ENCODE measurements at regions of chr10 and their contacts with region 1.

Region 1: GRCh38 chr10:114550756-114551635 is 107.1 kb downstream of the ABLIM1 start:
- DNase-seq: no peak
- ATAC-seq: no peak; the same call in 2 of the 3 replicates
- H3K4me3 ChIP-seq: no peak overlapping the region
- H3K27ac ChIP-seq: no peak overlapping the region
- H3K4me1 ChIP-seq: no peaks in the 10 kb centered on the region
- H3K27me3 ChIP-seq: no peaks in the 10 kb centered on the region; a peak in 1 of 4 replicates
- CTCF ChIP-seq: peak in 2 of 3 experiments; percentile 37 to 42; a peak in 3 of 6 replicates
- EP300 ChIP-seq: no peak
- POLR2A ChIP-seq: no peak
- RAD21 ChIP-seq: peak; percentile 41

Region 2: GRCh38 chr10:114526504-114527238 is 24.3 kb before region 1 on chr10:
- CTCF ChIA-PET with region 1: interaction called, 10 read pairs
- POLR2A ChIA-PET with region 1: no interaction called
- RAD21 ChIA-PET with region 1: no interaction called
- SMC1A ChIA-PET with region 1: interaction called, 3 read pairs
- in situ Hi-C with region 1: no loop called
- intact Hi-C with region 1: no loop called
- DNase-seq: peak; percentile 95
- ATAC-seq: peak; percentile 98
- H3K4me3 ChIP-seq: peak overlapping the region; percentile 69
- H3K27ac ChIP-seq: peak overlapping the region; percentile 71
- H3K4me1 ChIP-seq: 0 out of 2 replicates have a peak, but pooled peaks cover 3% of the 10 kb centered on the region
- H3K27me3 ChIP-seq: no peaks in the 10 kb centered on the region; a peak in 1 of 4 replicates
- CTCF ChIP-seq: no peak
- EP300 ChIP-seq: peak in 1 of 2 experiments; percentile 64; a peak in 2 of 4 replicates
- POLR2A ChIP-seq: peak; percentile 90
- RAD21 ChIP-seq: 0 out of 2 replicates have a peak, but pooled peaks have one; percentile 4

Region 3: GRCh38 chr10:114615600-114616007 is 64.6 kb after region 1 on chr10:
- CTCF ChIA-PET with region 1: no interaction called
- POLR2A ChIA-PET with region 1: no interaction called
- RAD21 ChIA-PET with region 1: no interaction called
- SMC1A ChIA-PET with region 1: no interaction called
- in situ Hi-C with region 1: no loop called
- intact Hi-C with region 1: no loop called
- DNase-seq: no peak
- ATAC-seq: peak; percentile 91
- H3K4me3 ChIP-seq: no peak overlapping the region
- H3K27ac ChIP-seq: no peak overlapping the region
- H3K4me1 ChIP-seq: no peaks in the 10 kb centered on the region
- H3K27me3 ChIP-seq: no peaks in the 10 kb centered on the region; a peak in 1 of 4 replicates
- CTCF ChIP-seq: no peak
- EP300 ChIP-seq: no peak
- POLR2A ChIP-seq: no peak
- RAD21 ChIP-seq: no peak

Region 4: GRCh38 chr10:114694752-114695151 is 143.8 kb after region 1 on chr10:
- CTCF ChIA-PET with region 1: interaction called, 17 read pairs
- POLR2A ChIA-PET with region 1: no interaction called
- RAD21 ChIA-PET with region 1: interaction called, 3 read pairs
- SMC1A ChIA-PET with region 1: interaction called, 3 read pairs
- in situ Hi-C with region 1: no loop called
- intact Hi-C with region 1: no loop called
- DNase-seq: no peak
- ATAC-seq: peak; percentile 59; the same call in 2 of the 3 replicates
- H3K4me3 ChIP-seq: no peak overlapping the region
- H3K27ac ChIP-seq: no peak overlapping the region
- H3K4me1 ChIP-seq: no peaks in the 10 kb centered on the region
- H3K27me3 ChIP-seq: no peaks in the 10 kb centered on the region; a peak in 2 of 4 replicates
- CTCF ChIP-seq: peak; percentile 40 to 54 (median 44); a peak in 5 of 6 replicates
- EP300 ChIP-seq: no peak
- POLR2A ChIP-seq: no peak
- RAD21 ChIP-seq: peak; percentile 61

Region 5: GRCh38 chr10:114703377-114704107 is 152.5 kb after region 1 on chr10:
- CTCF ChIA-PET with region 1: interaction called, 5 read pairs
- POLR2A ChIA-PET with region 1: interaction called, 3 read pairs
- RAD21 ChIA-PET with region 1: interaction called, 3 read pairs
- SMC1A ChIA-PET with region 1: interaction called, 3 read pairs
- in situ Hi-C with region 1: no loop called
- intact Hi-C with region 1: loop called (anchors 1 kb)
- DNase-seq: no peak
- ATAC-seq: peak; percentile 61
- H3K4me3 ChIP-seq: no peak overlapping the region
- H3K27ac ChIP-seq: no peak overlapping the region
- H3K4me1 ChIP-seq: no peaks in the 10 kb centered on the region
- H3K27me3 ChIP-seq: no peaks in the 10 kb centered on the region; a peak in 1 of 4 replicates
- CTCF ChIP-seq: peak; percentile 46 to 58 (median 57)
- EP300 ChIP-seq: no peak
- POLR2A ChIP-seq: no peak
- RAD21 ChIP-seq: peak; percentile 68

Region 6: DNA sequence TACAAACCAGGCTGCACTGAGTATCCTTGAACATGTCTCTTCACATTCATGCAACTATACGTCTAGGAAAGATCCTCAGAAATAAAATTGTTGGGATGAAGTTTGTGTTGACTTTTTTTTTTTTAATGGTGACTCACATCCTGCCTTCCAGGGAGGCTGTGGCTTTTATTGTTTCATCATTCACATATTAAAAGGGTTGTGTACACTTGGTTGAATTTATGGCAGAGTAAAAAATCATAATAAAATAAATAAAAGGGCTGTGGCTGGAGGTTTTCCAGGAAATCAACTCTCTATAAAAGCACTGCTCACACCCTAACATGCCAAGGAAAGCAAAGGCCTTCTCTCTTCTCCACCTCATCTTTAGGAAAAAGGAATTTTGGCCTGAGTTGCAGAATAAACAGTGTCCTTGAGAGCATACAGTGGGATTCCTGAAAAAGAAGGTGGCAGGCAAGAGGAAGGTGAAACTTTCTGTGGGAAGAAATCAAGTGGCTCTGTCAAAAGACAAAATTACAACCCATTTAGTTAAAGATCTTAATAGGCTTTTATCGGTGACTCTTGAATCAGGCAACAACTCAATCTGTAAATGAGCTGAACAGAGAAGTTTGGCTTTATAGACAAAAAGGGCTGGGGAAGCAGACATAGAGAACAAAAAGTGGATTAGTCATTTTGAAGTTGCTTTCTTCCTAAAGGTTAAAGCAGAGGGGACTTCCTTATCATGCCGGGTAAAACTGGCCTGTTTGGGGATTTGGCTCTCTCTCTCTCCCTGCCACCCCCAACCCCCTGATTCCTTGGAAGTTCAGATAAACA is 229.0 kb after region 1 on chr10:
- CTCF ChIA-PET with region 1: no interaction called
- POLR2A ChIA-PET with region 1: no interaction called
- RAD21 ChIA-PET with region 1: interaction called, 12 read pairs
- SMC1A ChIA-PET with region 1: interaction called, 8 read pairs
- in situ Hi-C with region 1: no loop called
- intact Hi-C with region 1: no loop called
- DNase-seq: no peak
- ATAC-seq: peak; percentile 53
- H3K4me3 ChIP-seq: no peak overlapping the region
- H3K27ac ChIP-seq: no peak overlapping the region
- H3K4me1 ChIP-seq: no peaks in the 10 kb centered on the region
- H3K27me3 ChIP-seq: peaks cover 0 to 2% of the 10 kb centered on the region in 2 experiments; a peak in 1 of 4 replicates
- CTCF ChIP-seq: no peak
- EP300 ChIP-seq: no peak
- POLR2A ChIP-seq: no peak
- RAD21 ChIP-seq: no peak

Region 7: GRCh38 chr10:114876602-114877300 is 325.8 kb after region 1 on chr10:
- CTCF ChIA-PET with region 1: interaction called, 7 read pairs
- POLR2A ChIA-PET with region 1: no interaction called
- RAD21 ChIA-PET with region 1: no interaction called
- SMC1A ChIA-PET with region 1: interaction called, 3 read pairs
- in situ Hi-C with region 1: no loop called
- intact Hi-C with region 1: loop called (anchors 5 kb)
- DNase-seq: peak; percentile 8
- ATAC-seq: peak; percentile 93
- H3K4me3 ChIP-seq: no peak overlapping the region
- H3K27ac ChIP-seq: no peak overlapping the region
- H3K4me1 ChIP-seq: no peaks in the 10 kb centered on the region
- H3K27me3 ChIP-seq: no peaks in the 10 kb centered on the region; a peak in 1 of 4 replicates
- CTCF ChIP-seq: peak; percentile 84 to 89 (median 85)
- EP300 ChIP-seq: no peak
- POLR2A ChIP-seq: no peak
- RAD21 ChIP-seq: peak; percentile 94

Region 8: DNA sequence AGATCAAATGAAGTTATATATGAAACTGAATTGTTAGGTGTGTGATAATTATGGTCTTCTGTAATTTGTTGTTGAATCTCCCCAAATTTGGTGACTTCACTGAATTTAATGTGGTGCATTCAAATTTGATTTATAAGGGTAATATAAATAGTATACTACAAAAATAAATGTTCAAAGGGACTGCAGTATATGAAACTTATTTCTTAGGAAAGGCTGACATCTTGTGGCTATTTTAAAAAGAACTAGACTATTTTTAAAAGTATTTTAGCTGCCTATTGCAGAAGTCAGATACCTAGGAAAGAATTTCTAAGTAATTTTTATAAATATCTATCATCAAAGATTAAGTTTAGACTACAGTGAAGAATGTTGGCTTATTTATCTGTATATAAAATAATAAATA is 578.8 kb after region 1 on chr10:
- CTCF ChIA-PET with region 1: interaction called, 7 read pairs
- POLR2A ChIA-PET with region 1: no interaction called
- RAD21 ChIA-PET with region 1: interaction called, 9 read pairs
- SMC1A ChIA-PET with region 1: interaction called, 4 read pairs
- in situ Hi-C with region 1: loop called (anchors 10 kb)
- intact Hi-C with region 1: loop called (anchors 2 kb)
- DNase-seq: no peak
- ATAC-seq: peak; percentile 50
- H3K4me3 ChIP-seq: no peak overlapping the region
- H3K27ac ChIP-seq: no peak overlapping the region
- H3K4me1 ChIP-seq: no peaks in the 10 kb centered on the region
- H3K27me3 ChIP-seq: no peaks in the 10 kb centered on the region
- CTCF ChIP-seq: no peak; a peak in 1 of 6 replicates
- EP300 ChIP-seq: no peak
- POLR2A ChIP-seq: no peak
- RAD21 ChIP-seq: peak; percentile 55

Measured in GM12878 (cell line).